ENCODE measurements at regions of chr17 and their contacts with region 1.

Region 1: GRCh38 chr17:79152636-79153035 is 78.0 kb downstream of the ENGASE start:
- DNase-seq: no peak
- ATAC-seq: 0 out of 2 replicates have a peak, but pooled peaks have one; percentile 16
- H3K4me3 ChIP-seq: no peak overlapping the region
- H3K27ac ChIP-seq: no peak overlapping the region
- H3K4me1 ChIP-seq: no peaks in the 10 kb centered on the region; the same call in 1 of the 2 replicates
- H3K27me3 ChIP-seq: peaks cover 67% of the 10 kb centered on the region
- CTCF ChIP-seq: no peak

Region 2: DNA sequence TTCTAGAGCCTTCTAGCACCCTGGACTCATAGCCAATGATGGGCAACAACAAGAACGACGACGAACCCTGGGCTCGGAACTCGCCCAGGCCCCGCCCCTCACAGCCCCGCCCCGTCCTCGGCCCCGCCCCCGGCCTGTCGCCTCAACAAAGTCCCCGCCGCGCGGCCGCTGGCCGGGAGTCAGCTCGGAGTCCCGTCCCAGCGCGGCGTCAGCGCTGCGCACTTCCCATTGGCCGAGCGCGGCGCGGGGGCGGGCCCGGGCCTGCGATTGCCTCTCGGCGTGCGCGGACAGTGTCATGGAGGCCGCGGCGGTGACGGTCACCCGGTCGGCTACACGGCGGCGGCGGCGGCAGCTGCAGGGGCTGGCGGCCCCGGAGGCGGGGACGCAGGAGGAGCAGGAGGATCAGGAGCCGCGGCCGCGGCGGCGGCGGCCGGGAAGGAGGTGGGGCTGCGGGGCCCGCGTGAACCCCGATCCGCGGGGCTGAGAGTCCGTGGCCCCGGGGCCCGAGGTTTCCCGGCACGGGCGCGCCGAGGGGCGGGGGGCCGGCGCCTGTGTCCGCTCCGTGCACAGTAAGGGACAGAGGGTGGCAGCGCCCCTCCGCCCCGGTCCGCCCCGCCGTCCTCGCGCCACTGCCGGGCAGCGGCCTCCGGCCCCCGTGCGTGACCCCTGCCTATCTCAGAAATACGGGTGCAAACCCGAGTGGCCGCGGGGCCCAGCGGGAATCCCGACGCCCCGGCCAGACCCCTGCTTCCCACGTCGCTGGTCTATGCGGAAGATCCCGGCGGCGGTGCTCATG is 77.8 kb before region 1 on chr17 and contains the start of gene ENGASE:
- CTCF ChIA-PET with region 1: no interaction called
- POLR2A ChIA-PET with region 1: interaction called, 10 read pairs
- intact Hi-C with region 1: no loop called
- DNase-seq: peak; percentile 97
- ATAC-seq: peak; percentile 98
- H3K4me3 ChIP-seq: peak within 1 kb of the TSS; percentile 95
- H3K27ac ChIP-seq: peak within 1 kb of the TSS; percentile 42; the same call in 1 of the 2 replicates
- H3K4me1 ChIP-seq: peaks cover 33% of the 10 kb centered on the region
- H3K27me3 ChIP-seq: no peaks in the 10 kb centered on the region
- CTCF ChIP-seq: no peak
- total RNA-seq, gene ENGASE: 34.5 and 58.1 TPM in 2 replicates